Vagina (tissue), 2 donors: ENCODE measurements at regions of chr11 and their contacts with region 1.

Region 1: DNA sequence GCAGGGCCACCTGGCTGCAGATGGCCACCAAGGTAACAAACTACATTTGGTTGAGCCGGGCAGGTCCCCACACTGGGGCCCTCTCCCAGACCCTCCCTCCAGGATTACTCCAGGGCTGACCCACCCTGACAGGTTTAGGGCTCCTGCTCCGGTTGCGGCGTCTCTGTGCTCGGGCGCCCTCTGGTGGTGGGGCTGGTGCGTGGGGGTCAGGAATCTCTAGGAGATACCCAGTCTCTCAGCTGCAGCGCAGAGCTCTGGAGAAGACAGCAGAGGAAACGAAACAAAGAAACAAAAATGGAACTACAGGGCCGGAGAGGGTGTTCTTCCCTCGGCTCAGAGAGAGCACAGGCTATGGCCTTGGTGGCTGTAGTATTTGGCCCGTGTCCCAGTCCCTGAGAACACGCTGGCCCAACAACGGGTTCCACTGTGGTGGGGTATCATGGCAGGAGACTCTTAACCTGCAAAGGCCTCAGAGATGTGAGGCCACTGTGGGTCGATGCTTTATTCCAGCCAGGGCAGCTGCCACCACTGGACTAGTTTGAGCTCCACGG is 2.4 kb downstream of the C11orf96 start:
- DNase-seq: no peak
- H3K4me3 ChIP-seq: peak overlapping the region; percentile 62 to 73
- H3K27ac ChIP-seq: peak overlapping the region; percentile 92
- H3K4me1 ChIP-seq: peaks cover 23% of the 10 kb centered on the region
- H3K27me3 ChIP-seq: no peaks in the 10 kb centered on the region
- CTCF ChIP-seq: peak; percentile 59 to 68 (median 62)
- POLR2A ChIP-seq: no peak

Region 2: DNA sequence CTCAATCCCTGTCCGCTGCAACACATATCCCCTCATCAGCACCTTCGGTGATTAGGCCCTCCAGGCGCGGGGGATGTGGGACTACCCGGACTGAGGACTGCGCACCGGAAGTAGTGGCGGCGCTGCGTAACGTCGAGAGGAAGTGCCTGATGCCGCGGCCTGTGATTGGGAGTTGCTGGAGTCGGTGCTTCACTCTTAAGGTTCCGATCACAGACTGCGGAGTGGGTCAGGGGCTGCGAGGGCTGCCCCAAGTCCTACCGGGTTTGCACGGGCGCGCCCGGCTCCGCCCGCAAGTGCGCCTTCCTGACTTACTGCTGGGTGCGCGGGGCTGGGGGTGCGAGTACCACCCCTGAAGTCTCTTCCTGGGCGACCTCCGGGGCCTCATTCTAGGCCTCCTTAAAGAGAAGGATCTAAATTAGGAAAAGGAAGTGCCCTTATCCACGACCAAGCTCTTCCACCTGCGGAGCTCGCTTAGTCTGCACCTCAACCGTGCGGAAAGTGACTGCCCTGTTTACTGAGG is 64.1 kb before region 1 on chr11 and contains the start of gene ALKBH3:
- intact Hi-C with region 1: loop called (anchors 10 kb)
- DNase-seq: peak in 1 of 2 donors; percentile 92
- H3K4me3 ChIP-seq: peak within 1 kb of the TSS; percentile 59 to 76
- H3K27ac ChIP-seq: peak within 1 kb of the TSS; percentile 69
- H3K4me1 ChIP-seq: peaks cover 20% of the 10 kb centered on the region
- H3K27me3 ChIP-seq: no peaks in the 10 kb centered on the region
- CTCF ChIP-seq: no peak
- POLR2A ChIP-seq: no peak
- total RNA-seq, gene ALKBH3: 33.4 TPM

Region 3: DNA sequence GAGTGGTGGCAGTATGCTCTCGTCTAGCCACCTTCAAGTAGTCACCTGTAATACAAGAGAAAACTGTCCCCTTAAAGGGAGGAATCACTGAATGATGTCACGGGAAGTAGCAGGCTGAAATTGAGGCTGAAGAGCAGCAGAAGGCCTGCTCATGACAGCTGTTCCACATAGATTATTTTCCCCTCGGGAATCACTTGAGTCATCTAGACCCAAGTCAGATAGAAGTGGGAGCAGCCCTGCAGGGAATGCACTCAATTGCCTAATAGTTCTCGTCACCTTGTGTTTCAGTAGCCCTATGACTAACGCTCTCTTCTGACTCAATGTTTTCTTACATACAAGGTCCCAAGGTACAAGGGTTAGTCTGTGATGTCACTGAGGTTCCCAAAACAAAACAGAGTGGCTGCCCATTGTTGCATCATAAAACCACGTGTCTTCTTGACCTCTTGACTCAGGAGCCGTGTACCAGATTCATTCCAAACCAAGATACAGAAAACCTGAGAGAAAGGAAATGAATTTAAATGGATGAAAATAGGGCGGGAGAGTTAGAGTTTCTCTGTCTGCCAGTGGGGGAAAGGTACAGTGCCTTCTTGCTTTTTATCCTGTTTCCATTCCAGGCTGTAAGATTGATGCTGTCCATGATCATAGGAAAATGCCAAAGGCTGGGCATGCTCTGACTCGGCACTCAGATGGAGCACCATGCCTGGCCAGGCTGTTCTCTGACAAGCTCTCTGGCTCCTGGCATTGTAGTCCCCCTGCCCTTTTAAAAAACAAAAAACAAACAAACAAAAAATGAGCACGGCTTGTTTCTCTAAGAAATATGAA is 24.0 kb before region 1 on chr11:
- intact Hi-C with region 1: loop called (anchors 1 kb)
- DNase-seq: peak in 1 of 2 donors; percentile 99
- H3K4me3 ChIP-seq: no peak overlapping the region
- H3K27ac ChIP-seq: peak overlapping the region; percentile 85
- H3K4me1 ChIP-seq: peaks cover 47% of the 10 kb centered on the region
- H3K27me3 ChIP-seq: no peaks in the 10 kb centered on the region
- CTCF ChIP-seq: no peak
- POLR2A ChIP-seq: no peak

Region 4: DNA sequence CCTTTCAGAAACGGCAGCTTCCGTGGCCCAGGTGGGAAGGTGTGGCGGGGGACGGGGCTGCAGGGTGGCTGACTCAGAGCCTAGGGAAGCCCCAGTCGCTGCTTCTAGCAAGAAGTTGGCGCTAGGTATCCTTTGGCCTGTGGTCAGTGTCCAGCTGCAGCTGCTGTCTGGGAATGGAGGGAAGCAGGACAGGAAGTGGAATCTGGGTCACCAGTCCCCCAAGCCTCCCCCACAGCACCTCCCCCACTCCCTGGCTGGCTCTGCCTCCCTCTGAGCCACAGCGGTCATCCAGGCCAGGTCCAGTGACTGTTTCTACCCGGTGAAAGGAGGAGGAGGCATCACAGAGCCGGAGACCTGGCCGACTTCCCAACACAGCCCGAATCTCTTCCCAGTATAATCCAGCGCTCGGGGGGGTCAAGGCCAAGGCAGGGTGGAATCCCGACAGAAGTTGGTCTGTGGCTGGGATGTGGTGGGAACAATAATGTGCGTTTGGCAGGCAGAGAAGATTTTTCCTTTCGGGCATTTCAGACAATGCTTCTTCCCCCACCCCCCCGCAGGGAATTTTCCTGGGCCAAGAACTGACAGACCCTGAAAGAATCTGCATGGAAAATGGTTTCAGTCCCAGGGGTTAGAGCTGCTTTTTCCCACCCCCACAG is 42.7 kb after region 1 on chr11:
- intact Hi-C with region 1: loop called (anchors 5 kb)
- DNase-seq: peak in 1 of 2 donors; percentile 97
- H3K4me3 ChIP-seq: peak overlapping the region in 1 of 2 donors; percentile 17
- H3K27ac ChIP-seq: peak overlapping the region; percentile 77
- H3K4me1 ChIP-seq: peaks cover 32% of the 10 kb centered on the region
- H3K27me3 ChIP-seq: no peaks in the 10 kb centered on the region
- CTCF ChIP-seq: no peak
- POLR2A ChIP-seq: no peak

Region 5: DNA sequence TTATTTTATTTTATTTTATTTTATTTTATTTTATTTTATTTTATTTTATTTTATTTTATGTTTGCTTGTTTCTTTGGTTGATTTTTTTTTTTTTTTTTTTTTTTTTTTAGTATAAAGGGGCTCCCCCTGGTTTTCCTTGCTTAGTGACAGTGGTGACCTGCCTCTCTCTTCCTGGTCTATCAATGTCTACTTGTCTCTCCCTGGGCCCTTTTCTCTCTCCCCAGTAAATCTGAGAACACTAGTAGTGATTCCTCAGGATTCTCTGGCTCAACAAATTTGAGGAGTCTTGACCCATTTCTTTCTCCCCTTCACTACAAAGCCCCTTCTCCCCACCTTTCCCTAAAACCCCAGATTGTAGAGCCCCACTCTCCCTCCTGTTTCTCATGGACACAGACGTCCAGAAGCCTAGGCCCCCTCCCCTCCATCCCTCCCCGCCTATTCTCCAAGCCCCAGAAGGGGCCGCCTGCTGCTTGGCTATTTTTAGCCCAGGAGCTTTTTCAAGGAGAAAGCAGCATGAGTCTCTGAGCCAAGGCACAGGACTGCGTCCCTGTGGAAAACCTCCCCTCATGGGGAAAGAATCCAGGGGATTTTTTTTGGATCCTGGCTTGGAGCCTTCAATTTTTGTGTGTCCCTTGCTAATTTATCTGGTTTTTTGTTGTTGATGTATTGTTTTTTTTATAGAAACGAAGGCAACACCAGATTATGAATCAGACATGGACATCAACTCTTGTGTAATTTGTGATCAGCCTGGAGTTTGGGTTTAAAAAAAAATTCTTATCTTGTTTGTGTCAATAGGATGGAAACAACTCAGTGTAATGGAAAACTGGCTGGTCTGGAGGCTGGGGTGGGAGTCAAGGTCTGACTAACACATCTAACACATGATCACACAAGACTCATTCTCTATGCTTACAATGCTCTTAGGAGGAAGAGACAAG is 85.4 kb after region 1 on chr11:
- intact Hi-C with region 1: loop called (anchors 5 kb)
- DNase-seq: peak; percentile 70 to 90
- H3K4me3 ChIP-seq: no peak overlapping the region
- H3K27ac ChIP-seq: peak overlapping the region; percentile 78
- H3K4me1 ChIP-seq: peaks cover 27% of the 10 kb centered on the region
- H3K27me3 ChIP-seq: no peaks in the 10 kb centered on the region
- CTCF ChIP-seq: no peak
- POLR2A ChIP-seq: no peak